CD4-positive, alpha-beta T cell (primary cell): ENCODE measurements at regions of chr13 and their contacts with region 1.

Region 1: DNA sequence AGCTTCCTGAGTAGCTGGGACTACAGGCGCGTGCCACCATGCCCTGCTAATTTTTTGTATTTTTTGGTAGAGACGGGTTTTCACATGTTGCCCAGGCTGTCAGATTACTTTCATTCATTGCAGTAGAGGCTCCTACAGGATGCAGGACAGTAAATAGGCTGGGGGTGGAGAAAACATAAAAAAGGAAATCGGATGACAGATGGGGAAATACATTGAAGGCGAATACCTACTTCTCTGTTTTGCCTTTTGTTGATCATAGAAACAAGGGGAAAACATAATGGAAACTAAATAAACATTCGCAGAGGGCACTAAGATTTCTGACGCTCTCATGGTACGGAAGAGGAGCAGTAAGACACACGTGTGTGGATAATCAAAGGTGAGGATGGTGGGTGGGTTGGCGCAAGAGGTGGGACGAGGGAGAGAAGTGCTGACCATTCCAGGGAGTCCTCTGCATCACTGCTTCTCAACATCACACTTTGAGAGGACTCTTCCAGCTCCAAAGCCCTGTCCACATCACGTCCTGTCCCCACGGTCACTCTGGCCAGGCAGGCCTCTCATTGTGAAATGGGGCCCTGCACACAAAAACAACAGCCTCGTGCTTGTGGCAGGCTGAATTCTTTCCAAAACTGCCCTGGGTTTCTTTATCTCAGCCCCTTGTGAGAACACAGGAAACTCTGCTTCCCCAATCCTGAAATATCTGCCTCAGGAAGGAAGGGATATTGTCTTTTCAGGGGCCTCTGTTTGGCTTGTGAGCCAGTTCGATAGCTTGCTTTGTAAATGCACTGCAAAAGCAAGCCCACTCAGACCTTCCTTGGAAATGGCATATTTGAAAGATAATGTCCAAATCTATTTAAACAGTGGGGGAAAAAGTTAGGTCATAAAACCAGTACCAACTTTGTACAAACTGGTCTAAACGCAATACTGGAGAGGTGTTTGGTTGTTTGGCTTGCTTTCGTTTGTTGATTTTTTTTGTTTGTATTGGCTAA is 188.5 kb downstream of the FOXO1 start:
- DNase-seq: no peak
- ATAC-seq: no peak
- H3K4me3 ChIP-seq: no peak overlapping the region
- H3K4me3 Mint-ChIP-seq: no peak overlapping the region
- H3K27ac ChIP-seq: no peak overlapping the region
- H3K27ac Mint-ChIP-seq: no peak overlapping the region
- H3K4me1 ChIP-seq: peaks cover 32% of the 10 kb centered on the region
- H3K4me1 Mint-ChIP-seq: peaks cover 73% of the 10 kb centered on the region
- H3K27me3 ChIP-seq: no peaks in the 10 kb centered on the region
- H3K27me3 Mint-ChIP-seq: no peaks in the 10 kb centered on the region
- CTCF ChIP-seq: no peak

Region 2: GRCh38 chr13:39777527-39778061 is 700.3 kb before region 1 on chr13:
- CTCF ChIA-PET with region 1: no interaction called
- POLR2A ChIA-PET with region 1: no interaction called
- intact Hi-C with region 1: loop called in 1 of 2 experiments (anchors 10 kb)
- DNase-seq: peak in 6 of 14 experiments; percentile 6 to 56 (median 41)
- ATAC-seq: peak; percentile 60
- H3K4me3 ChIP-seq: no peak overlapping the region
- H3K4me3 Mint-ChIP-seq: no peak overlapping the region
- H3K27ac ChIP-seq: no peak overlapping the region
- H3K27ac Mint-ChIP-seq: peak overlapping the region; percentile 58
- H3K4me1 ChIP-seq: peaks cover 18% of the 10 kb centered on the region
- H3K4me1 Mint-ChIP-seq: peaks cover 37% of the 10 kb centered on the region
- H3K27me3 ChIP-seq: no peaks in the 10 kb centered on the region
- H3K27me3 Mint-ChIP-seq: no peaks in the 10 kb centered on the region
- CTCF ChIP-seq: peak; percentile 63

Region 3: DNA sequence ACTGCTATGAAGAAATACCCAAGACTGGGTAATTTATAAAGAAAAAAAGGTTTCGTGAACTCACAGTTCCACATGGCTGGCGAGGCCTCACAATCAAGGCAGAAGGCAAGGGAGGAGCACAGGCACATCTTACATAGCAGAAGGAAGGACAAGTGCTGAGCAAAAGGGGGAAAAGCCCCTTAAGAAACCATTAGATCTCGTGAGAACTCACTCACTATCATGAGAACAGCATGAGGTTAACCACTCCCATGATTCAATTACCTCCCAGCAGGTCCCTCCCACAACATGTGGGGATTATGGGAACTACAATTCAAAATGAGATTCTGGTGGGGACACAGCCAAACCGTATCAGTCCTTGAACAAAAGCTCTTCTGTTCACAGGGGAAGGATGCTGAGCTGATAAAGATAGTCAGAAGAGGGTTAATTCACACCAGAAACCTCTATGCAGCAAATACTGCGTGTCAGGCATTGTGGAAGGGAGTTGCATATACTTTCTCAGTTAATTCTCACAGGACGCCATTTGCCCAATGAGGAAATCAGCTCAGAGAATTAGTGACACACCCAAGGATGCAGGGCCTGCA is 57.7 kb before region 1 on chr13:
- CTCF ChIA-PET with region 1: no interaction called
- POLR2A ChIA-PET with region 1: no interaction called
- intact Hi-C with region 1: no loop called
- DNase-seq: no peak
- ATAC-seq: no peak
- H3K4me3 ChIP-seq: no peak overlapping the region
- H3K4me3 Mint-ChIP-seq: no peak overlapping the region
- H3K27ac ChIP-seq: no peak overlapping the region
- H3K27ac Mint-ChIP-seq: no peak overlapping the region
- H3K4me1 ChIP-seq: peaks cover 4% of the 10 kb centered on the region
- H3K4me1 Mint-ChIP-seq: peaks cover 11% of the 10 kb centered on the region
- H3K27me3 ChIP-seq: no peaks in the 10 kb centered on the region
- H3K27me3 Mint-ChIP-seq: no peaks in the 10 kb centered on the region
- CTCF ChIP-seq: no peak

Region 4: GRCh38 chr13:40433577-40433976 is 44.3 kb before region 1 on chr13:
- CTCF ChIA-PET with region 1: no interaction called
- POLR2A ChIA-PET with region 1: no interaction called
- intact Hi-C with region 1: loop called in 1 of 2 experiments (anchors 5 kb)
- DNase-seq: peak in 12 of 14 experiments; percentile 19 to 76 (median 39)
- ATAC-seq: peak; percentile 55
- H3K4me3 ChIP-seq: no peak overlapping the region
- H3K4me3 Mint-ChIP-seq: peak overlapping the region; percentile 62
- H3K27ac ChIP-seq: no peak overlapping the region
- H3K27ac Mint-ChIP-seq: peak overlapping the region; percentile 73
- H3K4me1 ChIP-seq: peaks cover 39% of the 10 kb centered on the region
- H3K4me1 Mint-ChIP-seq: peaks cover 72% of the 10 kb centered on the region
- H3K27me3 ChIP-seq: no peaks in the 10 kb centered on the region
- H3K27me3 Mint-ChIP-seq: no peaks in the 10 kb centered on the region
- CTCF ChIP-seq: no peak

Region 5: DNA sequence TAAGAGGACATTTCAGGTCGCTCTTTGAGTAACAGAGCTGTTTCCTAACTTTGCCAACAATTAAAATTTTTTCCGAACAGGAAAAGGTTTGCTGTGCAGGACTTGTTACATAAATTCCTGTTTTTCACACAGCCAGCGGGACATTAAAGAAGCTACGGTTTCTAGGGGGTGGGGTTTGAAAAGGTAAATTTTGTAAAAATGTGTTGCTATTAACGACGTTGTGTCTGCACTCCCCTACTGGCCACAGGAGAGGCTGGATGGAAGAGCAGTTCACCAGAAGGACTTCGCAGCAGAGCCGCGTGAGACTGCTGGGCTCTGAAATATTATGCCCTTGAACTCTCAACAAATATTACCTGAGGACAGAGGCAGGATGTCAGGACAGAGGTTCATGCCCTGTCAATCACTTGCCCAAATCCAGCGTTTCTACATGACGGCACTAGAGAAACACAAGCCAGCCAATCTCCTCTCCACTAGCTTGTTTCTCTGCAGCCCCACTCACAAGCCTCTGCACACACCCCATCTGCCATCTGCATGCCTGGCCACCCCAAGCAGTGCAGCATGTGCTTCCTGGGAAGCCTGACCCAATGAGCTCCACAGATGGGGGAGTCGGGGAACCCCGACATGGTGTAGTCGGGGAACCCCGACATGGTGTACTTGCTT is 86.6 kb after region 1 on chr13:
- CTCF ChIA-PET with region 1: no interaction called
- POLR2A ChIA-PET with region 1: no interaction called
- intact Hi-C with region 1: no loop called
- DNase-seq: peak in 3 of 14 experiments; percentile 22 to 63 (median 57)
- ATAC-seq: peak; percentile 21
- H3K4me3 ChIP-seq: no peak overlapping the region
- H3K4me3 Mint-ChIP-seq: peak overlapping the region; percentile 65
- H3K27ac ChIP-seq: peak overlapping the region in 1 of 2 donors; percentile 29
- H3K27ac Mint-ChIP-seq: peak overlapping the region; percentile 79
- H3K4me1 ChIP-seq: peaks cover 80% of the 10 kb centered on the region
- H3K4me1 Mint-ChIP-seq: peaks cover 93% of the 10 kb centered on the region
- H3K27me3 ChIP-seq: no peaks in the 10 kb centered on the region
- H3K27me3 Mint-ChIP-seq: no peaks in the 10 kb centered on the region
- CTCF ChIP-seq: no peak

Region 6: DNA sequence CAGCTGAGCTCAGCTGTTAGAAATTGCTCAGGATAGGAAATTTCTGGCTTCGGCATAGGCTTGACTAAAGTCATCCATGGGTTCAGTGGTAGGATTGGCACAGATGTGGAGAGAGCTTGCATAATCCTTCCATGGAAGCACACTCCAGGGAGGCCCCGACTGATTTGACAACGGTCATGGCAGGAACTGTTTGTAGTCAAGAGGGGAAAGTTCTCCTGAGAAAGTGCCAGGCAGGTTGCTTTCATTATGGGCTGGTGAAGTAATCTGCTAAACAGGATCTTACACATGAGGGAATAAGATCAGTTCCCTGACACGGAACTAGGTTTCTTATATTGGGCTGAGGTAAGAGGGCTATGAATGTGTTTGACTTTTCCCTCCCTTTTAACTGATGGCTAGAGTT is 1099.5 kb after region 1 on chr13:
- CTCF ChIA-PET with region 1: no interaction called
- POLR2A ChIA-PET with region 1: no interaction called
- intact Hi-C with region 1: no loop called
- DNase-seq: no peak
- ATAC-seq: no peak
- H3K4me3 ChIP-seq: no peak overlapping the region
- H3K4me3 Mint-ChIP-seq: no peak overlapping the region
- H3K27ac ChIP-seq: no peak overlapping the region
- H3K27ac Mint-ChIP-seq: no peak overlapping the region
- H3K4me1 ChIP-seq: no peaks in the 10 kb centered on the region
- H3K4me1 Mint-ChIP-seq: peaks cover 16% of the 10 kb centered on the region
- H3K27me3 ChIP-seq: no peaks in the 10 kb centered on the region
- H3K27me3 Mint-ChIP-seq: no peaks in the 10 kb centered on the region
- CTCF ChIP-seq: no peak